ENCODE measurements at regions of chr5 and their contacts with region 1.

Region 1: GRCh38 chr5:134904630-134905245 is at the start of gene PCBD2:
- DNase-seq: peak; percentile 80 to 89
- ATAC-seq: peak; percentile 84 to 85
- H3K4me3 ChIP-seq: peak within 1 kb of the TSS; percentile 77 to 94 (median 87)
- H3K27ac ChIP-seq: peak within 1 kb of the TSS; percentile 85 to 99 (median 96)
- H3K4me1 ChIP-seq: peaks cover 0 to 5% of the 10 kb centered on the region in 2 donors
- H3K27me3 ChIP-seq: no peaks in the 10 kb centered on the region
- CTCF ChIP-seq: peak; percentile 88 to 97 (median 92)
- POLR2A ChIP-seq: peak in 1 of 2 donors; percentile 50
- total RNA-seq, gene PCBD2: 16.9 to 21.7 (median 20.8) TPM

Region 2: DNA sequence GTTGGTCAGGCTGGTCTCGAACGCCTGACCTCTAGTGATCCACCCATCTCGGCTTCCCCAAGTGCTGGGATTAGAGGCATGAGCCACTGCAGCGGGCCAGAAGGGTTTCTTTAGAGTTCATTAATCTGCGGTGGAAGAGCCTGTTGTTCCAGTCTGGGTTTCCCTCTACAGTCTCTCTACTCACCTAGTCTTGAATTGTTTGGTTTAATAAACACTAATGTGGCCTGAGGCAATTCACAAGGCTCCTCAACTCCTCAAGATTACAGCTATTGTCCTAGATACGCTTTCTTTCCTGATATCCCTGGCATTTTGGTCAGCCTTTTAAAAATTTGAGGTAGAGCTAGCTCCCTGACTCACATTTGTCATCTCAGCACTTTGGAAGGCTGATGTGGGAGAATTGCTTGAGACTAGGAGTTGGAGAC is 267.6 kb before region 1 on chr5:
- in situ Hi-C with region 1: no loop called
- intact Hi-C with region 1: loop called (anchors 1 kb)
- DNase-seq: no peak
- ATAC-seq: no peak
- H3K4me3 ChIP-seq: no peak overlapping the region
- H3K27ac ChIP-seq: no peak overlapping the region
- H3K4me1 ChIP-seq: no peaks in the 10 kb centered on the region
- H3K27me3 ChIP-seq: no peaks in the 10 kb centered on the region
- CTCF ChIP-seq: no peak
- POLR2A ChIP-seq: no peak

Region 3: GRCh38 chr5:134664448-134664847 is 240.3 kb before region 1 on chr5:
- in situ Hi-C with region 1: no loop called
- intact Hi-C with region 1: no loop called
- DNase-seq: no peak
- ATAC-seq: no peak
- H3K4me3 ChIP-seq: no peak overlapping the region
- H3K27ac ChIP-seq: no peak overlapping the region
- H3K4me1 ChIP-seq: no peaks in the 10 kb centered on the region
- H3K27me3 ChIP-seq: no peaks in the 10 kb centered on the region
- CTCF ChIP-seq: no peak
- POLR2A ChIP-seq: no peak

Region 4: DNA sequence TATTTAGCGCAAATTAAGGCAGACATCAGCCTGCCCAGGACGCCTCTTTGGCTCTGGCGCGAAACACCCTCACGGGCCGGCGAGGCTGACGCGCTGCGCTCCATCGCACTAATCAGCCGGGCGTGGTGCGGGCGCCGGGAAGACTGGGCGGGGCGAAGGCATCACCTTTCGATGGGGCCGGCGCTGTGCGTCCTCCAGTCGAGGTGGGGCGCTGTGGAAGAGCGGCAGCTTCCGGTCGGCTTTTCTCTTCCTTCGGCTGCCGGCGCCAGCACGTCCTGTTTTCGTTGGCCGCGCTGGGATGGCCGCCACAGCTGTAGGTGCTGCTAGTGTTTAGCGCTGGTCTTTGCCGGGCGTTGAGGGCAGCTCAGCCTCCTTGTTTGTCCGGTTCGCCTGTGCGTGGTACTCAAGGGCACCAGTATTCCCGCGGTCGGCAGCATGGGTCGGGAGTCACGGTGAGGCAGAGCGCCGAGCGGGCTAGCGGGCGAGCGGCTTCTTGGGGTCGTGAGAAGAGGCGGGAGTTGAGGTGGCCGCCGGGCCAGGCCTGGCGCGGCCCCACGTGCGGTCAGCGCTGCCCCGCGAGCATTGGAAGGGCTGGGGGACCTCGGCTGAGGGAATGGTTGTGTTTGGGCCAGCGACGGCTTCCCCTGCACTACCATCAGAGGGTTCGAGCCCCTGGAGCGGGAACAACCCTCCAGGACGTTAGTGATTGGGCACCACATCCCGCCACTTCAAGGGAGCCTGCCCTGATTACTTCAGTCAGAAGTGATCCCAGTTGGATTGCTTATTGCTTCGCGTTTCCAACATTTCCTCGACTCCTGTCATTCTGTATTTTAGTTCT is 146.0 kb before region 1 on chr5 and contains the start of gene DDX46:
- in situ Hi-C with region 1: loop called in 1 of 4 experiments (anchors 25 kb)
- intact Hi-C with region 1: no loop called
- DNase-seq: peak; percentile 85 to 90
- ATAC-seq: peak; percentile 97
- H3K4me3 ChIP-seq: peak within 1 kb of the TSS; percentile 88 to 99 (median 94)
- H3K27ac ChIP-seq: peak within 1 kb of the TSS; percentile 80 to 93 (median 88)
- H3K4me1 ChIP-seq: peaks cover 20 to 29% of the 10 kb centered on the region in 2 donors
- H3K27me3 ChIP-seq: no peaks in the 10 kb centered on the region
- CTCF ChIP-seq: peak; percentile 48 to 83 (median 66)
- POLR2A ChIP-seq: peak; percentile 70 to 82
- total RNA-seq, gene DDX46: 29.1 to 41.3 (median 36.8) TPM

Region 5: DNA sequence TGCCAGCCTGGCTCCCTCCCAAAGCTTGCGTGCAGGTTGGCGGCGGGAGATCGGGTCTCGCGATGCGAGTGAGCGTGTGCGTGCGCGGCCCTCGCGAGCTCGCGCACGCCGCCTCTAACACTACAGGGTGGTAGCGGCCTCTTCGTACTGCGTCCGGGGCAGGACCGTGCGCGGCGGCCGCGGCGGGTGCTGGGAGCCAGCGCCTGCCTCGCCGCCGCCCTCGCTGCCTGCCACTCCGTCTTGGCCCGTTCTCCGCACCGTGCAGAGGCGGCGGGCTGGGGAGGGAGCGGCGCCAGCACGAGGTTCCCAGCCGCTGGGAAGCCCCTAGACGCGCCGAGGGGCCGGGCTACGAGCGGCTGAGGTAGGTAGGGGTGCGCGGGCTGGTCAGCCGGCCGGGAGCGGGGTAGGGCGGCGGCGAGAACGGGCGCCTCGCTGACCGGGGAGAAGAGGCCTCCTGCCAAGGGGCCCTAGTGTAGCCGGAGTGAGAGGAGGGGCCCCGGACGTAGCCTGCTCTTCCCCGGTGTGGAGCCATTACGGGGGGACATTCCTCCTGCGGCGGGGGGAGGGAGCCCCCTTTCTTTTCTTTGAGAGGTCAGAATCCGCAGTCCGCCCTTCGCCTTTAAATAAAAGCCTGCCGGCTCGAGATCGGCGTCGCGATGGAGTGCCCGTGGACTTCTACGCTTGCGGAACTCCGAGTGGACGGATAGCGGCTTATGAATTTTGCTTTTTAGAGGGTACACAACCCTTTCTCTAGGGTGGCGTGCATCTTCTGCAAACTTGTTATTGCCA is 58.7 kb before region 1 on chr5 and contains the start of gene C5orf24:
- in situ Hi-C with region 1: loop called in 2 of 4 experiments (anchors 5 kb)
- intact Hi-C with region 1: loop called (anchors 1 kb)
- DNase-seq: peak; percentile 90 to 94
- ATAC-seq: peak; percentile 96
- H3K4me3 ChIP-seq: peak within 1 kb of the TSS; percentile 85 to 89 (median 86)
- H3K27ac ChIP-seq: peak within 1 kb of the TSS; percentile 93 to 99 (median 95)
- H3K4me1 ChIP-seq: peaks cover 15 to 17% of the 10 kb centered on the region in 2 donors
- H3K27me3 ChIP-seq: no peaks in the 10 kb centered on the region
- CTCF ChIP-seq: no peak
- POLR2A ChIP-seq: peak; percentile 95 to 96
- total RNA-seq, gene C5orf24: 17.3 to 32.8 (median 23.4) TPM

Region 6: DNA sequence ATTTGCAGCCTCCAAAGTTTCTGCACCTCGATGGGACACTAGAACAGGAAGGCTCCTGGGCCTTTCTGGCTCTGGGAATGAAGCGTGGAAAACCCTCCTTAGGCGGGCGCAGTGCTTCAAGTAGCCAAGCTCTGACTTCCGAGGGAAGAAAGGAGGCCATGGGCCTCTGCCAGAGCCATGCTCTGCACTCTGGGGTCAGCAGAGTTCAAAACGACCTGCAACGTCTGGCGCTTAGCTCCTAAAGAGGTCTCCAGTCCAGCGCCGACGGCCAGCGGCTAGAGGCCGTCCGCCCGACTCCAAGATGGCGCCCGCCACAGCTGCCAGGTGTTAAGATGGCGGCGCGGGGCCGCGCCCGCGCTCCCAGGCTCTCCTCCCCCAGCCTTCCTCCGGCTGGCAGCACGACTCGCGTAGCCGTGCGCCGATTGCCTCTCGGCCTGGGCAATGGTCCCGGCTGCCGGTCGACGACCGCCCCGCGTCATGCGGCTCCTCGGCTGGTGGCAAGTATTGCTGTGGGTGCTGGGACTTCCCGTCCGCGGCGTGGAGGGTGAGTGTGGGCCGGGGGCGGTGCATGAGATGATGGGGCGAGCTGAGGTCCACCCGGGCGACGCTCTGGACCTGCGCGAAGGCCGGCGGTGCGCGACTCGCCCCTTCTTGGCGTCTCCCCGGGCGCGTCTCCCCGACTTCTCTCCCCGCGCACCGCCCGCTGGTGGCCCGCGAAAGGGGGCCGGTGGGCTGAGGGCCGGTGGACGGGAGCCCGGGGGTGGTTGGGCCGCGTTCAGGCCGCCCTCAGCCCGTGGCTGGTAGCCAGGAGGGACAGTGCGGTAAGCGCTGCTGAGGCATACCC is 30.5 kb before region 1 on chr5 and contains the start of gene TXNDC15:
- in situ Hi-C with region 1: no loop called
- intact Hi-C with region 1: loop called (anchors 1 kb)
- DNase-seq: peak; percentile 79 to 85
- ATAC-seq: peak; percentile 89 to 91
- H3K4me3 ChIP-seq: peak within 1 kb of the TSS; percentile 92 to 98 (median 95)
- H3K27ac ChIP-seq: peak within 1 kb of the TSS; percentile 95 to 99 (median 96)
- H3K4me1 ChIP-seq: peaks cover 17 to 19% of the 10 kb centered on the region in 2 donors
- H3K27me3 ChIP-seq: no peaks in the 10 kb centered on the region
- CTCF ChIP-seq: no peak
- POLR2A ChIP-seq: peak in 1 of 2 donors; percentile 38
- total RNA-seq, gene TXNDC15: 37.0 to 81.1 (median 59.6) TPM

Region 7: DNA sequence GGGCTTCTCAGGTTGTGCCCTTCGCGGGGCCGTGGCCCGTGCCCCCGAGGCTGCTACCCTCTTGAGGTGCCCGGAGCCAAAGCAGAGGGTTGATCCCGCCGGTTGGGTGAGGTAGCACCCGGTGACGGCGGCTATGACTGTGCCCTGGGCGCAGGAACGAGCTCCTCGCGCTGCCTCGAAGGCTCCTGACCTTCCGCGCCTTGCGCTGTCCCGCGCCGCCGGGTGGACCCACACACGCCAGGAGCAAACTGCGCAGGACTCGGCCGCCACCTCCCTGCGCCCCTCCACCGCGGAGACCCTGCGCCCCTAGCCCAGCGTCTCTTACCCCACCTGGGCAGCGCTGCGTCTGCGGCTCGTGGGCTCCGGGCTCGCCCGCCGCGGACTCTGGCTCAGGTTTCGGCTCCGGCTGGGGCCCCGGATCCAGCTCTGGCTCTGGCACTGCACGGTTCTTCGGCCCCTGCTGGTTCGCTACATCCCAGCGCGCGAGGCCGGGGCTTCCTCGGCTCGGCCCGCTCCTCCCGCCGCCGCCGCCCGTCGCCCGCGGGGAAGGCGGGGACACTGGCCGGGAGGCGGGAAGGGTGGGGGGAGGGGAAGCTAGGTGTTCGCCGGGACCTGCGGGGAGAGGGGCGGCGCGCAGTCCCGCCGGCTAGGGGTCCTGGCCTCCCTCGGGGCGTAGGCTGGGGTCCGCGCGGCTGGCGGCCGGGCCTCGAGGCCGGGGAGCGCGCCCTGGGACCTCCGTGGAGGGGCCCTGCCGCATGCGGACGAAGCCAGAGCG is 134.7 kb after region 1 on chr5:
- in situ Hi-C with region 1: no loop called
- intact Hi-C with region 1: no loop called
- DNase-seq: no peak
- ATAC-seq: peak in 1 of 2 donors; percentile 14
- H3K4me3 ChIP-seq: peak overlapping the region; percentile 9 to 49 (median 35)
- H3K27ac ChIP-seq: no peak overlapping the region
- H3K4me1 ChIP-seq: peaks cover 7 to 8% of the 10 kb centered on the region in 2 donors
- H3K27me3 ChIP-seq: peaks cover 57 to 79% (median 67%) of the 10 kb centered on the region in 3 donors
- CTCF ChIP-seq: no peak
- POLR2A ChIP-seq: no peak